Endothelial cell of umbilical vein (primary cell): ENCODE measurements at regions of chr10 and their contacts with region 1.

Region 1: GRCh38 chr10:14782691-14783363 is 8.1 kb upstream of the FAM107B start:
- DNase-seq: peak; percentile 100
- H3K4me3 ChIP-seq: no peak overlapping the region
- H3K27ac ChIP-seq: peak overlapping the region; percentile 90
- H3K4me1 ChIP-seq: peaks cover 39% of the 10 kb centered on the region
- H3K27me3 ChIP-seq: no peaks in the 10 kb centered on the region
- CTCF ChIP-seq: no peak
- POLR2A ChIP-seq: peak; percentile 92

Region 2: DNA sequence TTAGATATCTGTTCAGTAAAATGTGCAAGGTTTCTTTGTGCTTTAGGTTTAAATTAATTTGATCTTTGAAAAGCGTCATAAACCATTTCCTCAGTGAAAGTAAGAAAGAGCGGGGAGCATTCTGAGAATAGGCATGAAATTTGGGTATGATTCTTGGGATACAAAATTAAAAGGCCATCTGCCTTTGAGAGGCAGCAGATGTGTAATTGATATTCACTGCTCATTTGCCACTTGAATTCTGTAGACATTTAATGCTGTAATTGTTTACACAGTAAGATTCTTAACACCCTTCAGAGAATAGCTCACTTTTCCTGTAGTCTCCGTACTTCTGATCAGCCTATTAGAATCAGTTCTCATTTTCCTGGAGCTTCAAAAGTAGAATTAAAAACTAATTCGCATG is 470.8 kb before region 1 on chr10:
- CTCF ChIA-PET with region 1: no interaction called
- POLR2A ChIA-PET with region 1: no interaction called
- dilution Hi-C with region 1: no loop called
- intact Hi-C with region 1: no loop called
- DNase-seq: no peak
- H3K4me3 ChIP-seq: no peak overlapping the region
- H3K27ac ChIP-seq: no peak overlapping the region
- H3K4me1 ChIP-seq: no peaks in the 10 kb centered on the region
- H3K27me3 ChIP-seq: peaks cover 17 to 42% of the 10 kb centered on the region in 2 experiments
- CTCF ChIP-seq: no peak
- POLR2A ChIP-seq: no peak

Region 3: DNA sequence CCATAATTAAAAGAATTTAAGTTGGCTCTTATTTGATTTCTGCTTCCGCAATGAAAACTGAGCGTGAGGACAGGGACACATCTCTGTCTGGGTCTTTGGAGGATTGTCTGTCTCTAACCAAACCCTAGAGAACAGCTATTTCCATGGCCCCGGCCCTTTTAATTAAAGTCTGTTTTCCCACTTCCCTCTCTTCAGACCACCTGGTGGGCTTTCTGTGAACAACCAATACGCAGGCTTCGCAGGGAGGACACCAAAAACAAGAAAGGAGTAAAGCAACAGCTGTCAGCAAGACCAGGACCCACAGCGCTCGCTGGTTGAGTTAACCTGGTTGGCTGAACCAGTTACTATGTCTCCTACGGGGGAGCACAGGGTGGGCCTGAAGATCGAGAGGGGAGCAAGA is 235.0 kb before region 1 on chr10:
- CTCF ChIA-PET with region 1: no interaction called
- POLR2A ChIA-PET with region 1: interaction called, 15 read pairs
- dilution Hi-C with region 1: no loop called
- intact Hi-C with region 1: no loop called
- DNase-seq: no peak
- H3K4me3 ChIP-seq: no peak overlapping the region
- H3K27ac ChIP-seq: no peak overlapping the region
- H3K4me1 ChIP-seq: peaks cover 30% of the 10 kb centered on the region
- H3K27me3 ChIP-seq: no peaks in the 10 kb centered on the region
- CTCF ChIP-seq: peak; percentile 20 to 22
- POLR2A ChIP-seq: no peak

Region 4: DNA sequence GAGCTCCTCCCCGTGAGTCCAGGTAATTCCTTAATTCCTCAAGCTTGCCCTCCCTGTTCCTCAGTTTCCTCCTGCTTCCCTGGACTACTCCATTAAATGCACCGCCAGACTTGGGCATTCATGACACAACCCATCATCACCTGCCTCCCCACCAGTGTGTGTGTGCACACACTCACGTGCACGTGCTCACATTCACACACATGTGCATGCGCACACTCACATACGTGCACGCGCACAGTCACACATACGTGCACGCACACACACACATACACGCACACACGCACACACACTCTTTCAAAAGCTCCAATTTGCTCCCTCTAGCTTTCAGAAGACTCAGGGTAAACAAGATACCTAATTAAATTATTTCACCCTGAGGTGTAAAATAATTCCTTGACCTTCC is 224.8 kb before region 1 on chr10:
- CTCF ChIA-PET with region 1: no interaction called
- POLR2A ChIA-PET with region 1: no interaction called
- dilution Hi-C with region 1: no loop called
- intact Hi-C with region 1: no loop called
- DNase-seq: no peak
- H3K4me3 ChIP-seq: no peak overlapping the region
- H3K27ac ChIP-seq: no peak overlapping the region
- H3K4me1 ChIP-seq: peaks cover 62% of the 10 kb centered on the region
- H3K27me3 ChIP-seq: no peaks in the 10 kb centered on the region
- CTCF ChIP-seq: no peak
- POLR2A ChIP-seq: no peak

Region 5: DNA sequence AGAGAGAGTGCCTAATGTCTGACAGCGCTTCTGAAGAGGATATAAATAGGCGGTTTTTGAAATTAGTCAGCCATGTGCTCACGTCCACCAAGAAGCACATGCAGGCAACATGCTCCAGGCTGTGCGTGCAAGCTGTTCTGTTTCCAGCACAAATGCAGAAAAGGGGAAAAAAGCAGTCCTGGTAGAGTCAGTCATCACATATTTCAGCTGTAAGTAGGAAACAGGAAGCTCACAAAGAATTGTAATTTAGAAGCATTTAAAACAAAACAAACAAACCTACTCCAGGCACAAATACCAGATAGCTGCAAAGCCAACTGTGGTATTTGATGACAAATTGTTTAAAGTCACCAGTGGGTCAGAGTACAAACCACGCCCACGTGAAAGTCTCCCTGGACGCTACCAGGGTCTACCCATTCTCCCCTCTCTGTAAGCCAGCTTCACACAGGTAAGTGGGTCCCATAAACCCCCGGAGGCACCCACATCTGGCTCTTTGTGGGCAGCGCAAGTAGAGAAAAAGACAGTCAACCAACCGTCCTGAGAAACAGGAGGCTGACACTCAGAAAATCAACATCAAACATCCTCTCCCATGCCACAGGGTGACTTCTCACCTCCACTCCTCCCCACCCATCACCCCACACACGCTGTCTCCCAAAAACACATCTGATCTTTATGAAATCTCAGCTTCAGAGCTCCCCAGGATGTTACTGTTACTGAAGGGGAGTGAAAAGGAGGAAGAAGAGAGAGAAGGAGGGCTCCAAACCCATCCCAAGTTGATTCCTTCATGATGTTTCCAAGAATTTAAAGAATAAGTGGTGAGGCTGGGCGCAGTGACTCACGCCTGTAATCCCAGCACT is 194.5 kb before region 1 on chr10:
- CTCF ChIA-PET with region 1: interaction called, 3 read pairs
- POLR2A ChIA-PET with region 1: no interaction called
- dilution Hi-C with region 1: no loop called
- intact Hi-C with region 1: loop called (anchors 1 kb)
- DNase-seq: peak; percentile 97
- H3K4me3 ChIP-seq: peak overlapping the region in 1 of 3 experiments; percentile 11
- H3K27ac ChIP-seq: peak overlapping the region; percentile 99
- H3K4me1 ChIP-seq: peaks cover 47% of the 10 kb centered on the region
- H3K27me3 ChIP-seq: no peaks in the 10 kb centered on the region
- CTCF ChIP-seq: no peak
- POLR2A ChIP-seq: no peak

Region 6: GRCh38 chr10:14653271-14654228 is 129.3 kb before region 1 on chr10:
- CTCF ChIA-PET with region 1: no interaction called
- POLR2A ChIA-PET with region 1: no interaction called
- dilution Hi-C with region 1: no loop called
- intact Hi-C with region 1: no loop called
- DNase-seq: peak; percentile 47
- H3K4me3 ChIP-seq: no peak overlapping the region
- H3K27ac ChIP-seq: no peak overlapping the region
- H3K4me1 ChIP-seq: peaks cover under 1% of the 10 kb centered on the region
- H3K27me3 ChIP-seq: peaks cover 0 to 2% of the 10 kb centered on the region in 2 experiments
- CTCF ChIP-seq: no peak
- POLR2A ChIP-seq: no peak

Region 7: DNA sequence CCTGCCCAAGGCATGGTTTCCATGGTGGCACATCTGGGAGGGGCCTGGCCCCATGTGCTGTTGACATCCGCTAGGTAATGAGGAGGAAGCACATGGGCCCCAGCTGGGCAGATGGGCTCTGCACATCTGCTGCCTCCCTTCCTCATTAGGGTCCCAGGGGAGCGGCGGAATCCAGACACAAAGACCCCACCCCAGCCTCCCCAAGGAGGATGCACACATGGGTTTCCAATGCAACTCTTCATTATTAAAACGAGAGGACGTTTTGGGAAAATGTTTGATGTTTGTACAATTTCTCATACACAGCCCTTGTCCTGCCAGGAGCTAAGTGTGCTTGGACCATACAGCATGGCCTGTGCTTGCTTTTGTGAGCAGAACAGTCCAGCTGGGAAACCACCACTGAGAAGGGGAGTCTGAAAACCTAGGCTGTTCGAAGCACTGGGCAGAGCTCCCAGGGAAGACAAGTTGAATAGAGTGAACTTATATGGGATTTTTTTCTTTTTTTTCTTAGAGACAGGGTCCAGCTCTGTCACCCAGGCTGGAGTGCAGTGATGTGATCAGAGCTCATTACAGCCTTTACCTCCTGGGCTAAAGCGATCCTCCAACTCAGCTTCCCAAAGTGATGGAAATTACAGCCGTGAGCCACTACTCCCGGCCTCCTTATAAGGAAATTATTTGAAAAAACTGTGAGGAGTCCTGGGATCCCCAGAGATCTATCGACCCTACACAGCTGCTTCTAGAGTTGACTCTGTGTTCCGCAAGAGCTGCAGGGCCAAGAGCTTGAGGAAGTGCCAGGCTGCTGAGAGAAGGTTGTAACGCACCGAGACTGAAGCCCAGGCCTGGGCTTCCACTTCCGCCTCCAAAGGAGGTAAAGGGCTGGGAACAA is 31.6 kb before region 1 on chr10:
- CTCF ChIA-PET with region 1: interaction called, 3 read pairs
- POLR2A ChIA-PET with region 1: interaction called, 4 read pairs
- dilution Hi-C with region 1: no loop called
- intact Hi-C with region 1: loop called (anchors 1 kb)
- DNase-seq: no peak
- H3K4me3 ChIP-seq: no peak overlapping the region
- H3K27ac ChIP-seq: no peak overlapping the region
- H3K4me1 ChIP-seq: peaks cover 13% of the 10 kb centered on the region
- H3K27me3 ChIP-seq: peaks cover 0 to 1% of the 10 kb centered on the region in 2 experiments
- CTCF ChIP-seq: no peak
- POLR2A ChIP-seq: no peak

Region 8: GRCh38 chr10:14822879-14823755 is 40.3 kb after region 1 on chr10:
- CTCF ChIA-PET with region 1: no interaction called
- POLR2A ChIA-PET with region 1: no interaction called
- dilution Hi-C with region 1: no loop called
- intact Hi-C with region 1: loop called (anchors 1 kb)
- DNase-seq: peak; percentile 70
- H3K4me3 ChIP-seq: no peak overlapping the region
- H3K27ac ChIP-seq: no peak overlapping the region
- H3K4me1 ChIP-seq: peaks cover 20% of the 10 kb centered on the region
- H3K27me3 ChIP-seq: peaks cover 0 to 3% of the 10 kb centered on the region in 2 experiments
- CTCF ChIP-seq: peak; percentile 59 to 66
- POLR2A ChIP-seq: no peak

Region 9: GRCh38 chr10:14878266-14879054 is 95.6 kb after region 1 on chr10 and contains the start of gene SUV39H2:
- CTCF ChIA-PET with region 1: no interaction called
- POLR2A ChIA-PET with region 1: no interaction called
- dilution Hi-C with region 1: no loop called
- intact Hi-C with region 1: loop called (anchors 2 kb)
- DNase-seq: peak; percentile 98
- H3K4me3 ChIP-seq: peak within 1 kb of the TSS; percentile 88 to 97 (median 90)
- H3K27ac ChIP-seq: peak within 1 kb of the TSS; percentile 69
- H3K4me1 ChIP-seq: peaks cover 20% of the 10 kb centered on the region
- H3K27me3 ChIP-seq: no peaks in the 10 kb centered on the region
- CTCF ChIP-seq: no peak
- POLR2A ChIP-seq: peak; percentile 88
- total RNA-seq, gene SUV39H2: 25.8 and 29.9 TPM in 2 replicates

Region 10: GRCh38 chr10:15325243-15325943 is 542.6 kb after region 1 on chr10:
- CTCF ChIA-PET with region 1: no interaction called
- POLR2A ChIA-PET with region 1: no interaction called
- dilution Hi-C with region 1: no loop called
- intact Hi-C with region 1: no loop called
- DNase-seq: peak; percentile 84
- H3K4me3 ChIP-seq: peak overlapping the region in 1 of 3 experiments; percentile 8
- H3K27ac ChIP-seq: peak overlapping the region; percentile 46
- H3K4me1 ChIP-seq: peaks cover 27% of the 10 kb centered on the region
- H3K27me3 ChIP-seq: no peaks in the 10 kb centered on the region
- CTCF ChIP-seq: no peak
- POLR2A ChIP-seq: peak; percentile 21